ENCODE measurements at regions of chr19 and their contacts with region 1.

Region 1: GRCh38 chr19:55467236-55468053 is 2.9 kb upstream of the C19orf85 start:
- DNase-seq: peak; percentile 85
- CTCF ChIP-seq: peak; percentile 97

Region 2: GRCh38 chr19:55484593-55485438 is 17.4 kb after region 1 on chr19 and contains the start of gene NAT14:
- CTCF ChIA-PET with region 1: interaction called, 37 read pairs
- POLR2A ChIA-PET with region 1: no interaction called
- DNase-seq: peak; percentile 91
- CTCF ChIP-seq: no peak

Region 3: GRCh38 chr19:55494172-55494761 is 26.8 kb after region 1 on chr19:
- CTCF ChIA-PET with region 1: interaction called, 16 read pairs
- POLR2A ChIA-PET with region 1: no interaction called
- DNase-seq: no peak
- CTCF ChIP-seq: no peak

Region 4: GRCh38 chr19:55516878-55517620 is 49.6 kb after region 1 on chr19:
- CTCF ChIA-PET with region 1: interaction called, 14 read pairs
- POLR2A ChIA-PET with region 1: no interaction called
- DNase-seq: peak; percentile 100
- CTCF ChIP-seq: peak; percentile 98

Region 5: DNA sequence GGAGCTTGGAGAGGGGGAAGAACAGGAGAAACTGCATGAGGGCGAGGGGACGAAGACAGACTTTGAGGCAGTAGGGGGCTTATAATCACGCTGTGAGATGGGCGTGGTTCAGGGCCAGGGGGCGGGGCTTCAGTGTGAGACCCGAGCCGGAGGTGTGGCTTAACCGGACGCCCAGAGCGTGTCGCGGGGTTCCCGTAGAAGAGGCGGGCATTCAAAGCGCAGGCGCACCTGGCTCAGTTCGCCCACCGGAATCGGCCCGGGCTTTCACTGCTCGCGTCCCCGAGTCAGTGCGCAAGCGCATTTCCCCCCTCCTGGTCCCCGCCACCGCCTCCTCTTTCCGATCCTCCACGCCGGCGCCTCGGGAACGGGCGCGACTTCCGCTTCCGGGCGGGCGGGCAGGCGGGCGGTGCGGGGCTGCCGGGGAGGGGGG is 137.8 kb after region 1 on chr19:
- CTCF ChIA-PET with region 1: interaction called, 11 read pairs
- POLR2A ChIA-PET with region 1: no interaction called
- DNase-seq: peak; percentile 96
- CTCF ChIP-seq: no peak